Gastrocnemius medialis (tissue), 4 donors: ENCODE measurements at regions of chr10 and their contacts with region 1.

Region 1: DNA sequence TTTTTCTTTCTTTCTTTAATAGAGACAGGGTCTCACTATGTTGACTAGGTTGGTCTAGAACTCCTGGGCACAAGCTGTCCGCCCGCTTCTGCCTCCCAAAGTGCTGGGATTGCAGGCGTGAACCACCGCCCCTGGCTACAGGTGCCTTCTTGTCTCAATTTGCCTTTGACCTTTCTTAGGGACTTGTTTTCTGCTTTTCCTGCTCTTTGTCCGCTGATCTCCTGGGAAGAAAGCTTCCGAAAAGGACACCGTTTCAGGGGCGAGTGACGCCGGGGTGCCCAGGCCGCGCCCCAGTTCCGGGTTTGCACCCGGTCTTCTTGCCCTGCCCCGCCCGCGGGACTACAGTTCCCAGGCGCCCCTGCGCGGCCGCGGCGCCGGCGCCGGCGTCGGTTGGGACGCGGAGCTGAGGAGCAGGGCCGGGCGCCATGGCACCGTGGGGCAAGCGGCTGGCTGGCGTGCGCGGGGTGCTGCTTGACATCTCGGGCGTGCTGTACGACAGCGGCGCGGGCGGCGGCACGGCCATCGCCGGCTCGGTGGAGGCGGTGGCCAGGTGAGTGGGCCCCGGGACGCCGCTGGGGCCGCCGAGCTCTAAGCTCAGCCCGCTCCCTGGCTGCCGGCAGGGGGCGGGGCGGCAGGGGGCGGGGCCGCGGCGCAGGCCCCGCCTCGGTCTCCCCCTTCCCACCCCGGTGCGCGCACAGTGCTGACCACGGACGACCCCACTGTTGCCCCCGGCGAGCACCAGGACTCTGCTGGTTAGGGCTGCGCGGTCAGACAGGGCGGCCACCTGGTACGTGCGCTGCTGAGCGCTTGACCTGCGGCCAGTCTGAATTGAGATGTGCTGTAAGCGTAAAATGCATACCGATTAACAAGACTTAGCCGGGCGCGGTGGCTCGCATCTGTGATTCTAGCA is at the start of gene LHPP:
- DNase-seq: peak; percentile 51 to 76
- ATAC-seq: peak; percentile 97 to 98
- H3K4me3 ChIP-seq: peak within 1 kb of the TSS; percentile 64 to 72 (median 67)
- H3K27ac ChIP-seq: peak within 1 kb of the TSS; percentile 76 to 92 (median 88)
- H3K4me1 ChIP-seq: no peaks in the 10 kb centered on the region
- H3K27me3 ChIP-seq: no peaks in the 10 kb centered on the region
- CTCF ChIP-seq: peak in 3 of 5 experiments; percentile 63 to 91 (median 69)
- POLR2A ChIP-seq: peak in 1 of 2 donors; percentile 22
- total RNA-seq, gene LHPP: 4.9 to 16.0 (median 12.2) TPM

Region 2: GRCh38 chr10:124418726-124419501 is 42.8 kb before region 1 on chr10 and contains the start of gene OAT:
- in situ Hi-C with region 1: no loop called
- intact Hi-C with region 1: loop called (anchors 2 kb)
- DNase-seq: peak; percentile 94 to 95
- ATAC-seq: peak; percentile 93
- H3K4me3 ChIP-seq: peak within 1 kb of the TSS; percentile 67 to 86 (median 76)
- H3K27ac ChIP-seq: peak within 1 kb of the TSS; percentile 81 to 95 (median 94)
- H3K4me1 ChIP-seq: peaks cover 31 to 42% of the 10 kb centered on the region in 2 donors
- H3K27me3 ChIP-seq: no peaks in the 10 kb centered on the region
- CTCF ChIP-seq: no peak
- POLR2A ChIP-seq: peak; percentile 98 to 99
- total RNA-seq, gene OAT: 20.1 to 97.2 (median 42.6) TPM

Region 3: GRCh38 chr10:124486635-124487034 is 24.9 kb after region 1 on chr10:
- in situ Hi-C with region 1: no loop called
- intact Hi-C with region 1: no loop called
- DNase-seq: no peak
- ATAC-seq: no peak
- H3K4me3 ChIP-seq: no peak overlapping the region
- H3K27ac ChIP-seq: no peak overlapping the region
- H3K4me1 ChIP-seq: no peaks in the 10 kb centered on the region
- H3K27me3 ChIP-seq: no peaks in the 10 kb centered on the region
- CTCF ChIP-seq: no peak
- POLR2A ChIP-seq: no peak